WTC11 (cell line): ENCODE measurements at regions of chr1 and their contacts with region 1.

Region 1: DNA sequence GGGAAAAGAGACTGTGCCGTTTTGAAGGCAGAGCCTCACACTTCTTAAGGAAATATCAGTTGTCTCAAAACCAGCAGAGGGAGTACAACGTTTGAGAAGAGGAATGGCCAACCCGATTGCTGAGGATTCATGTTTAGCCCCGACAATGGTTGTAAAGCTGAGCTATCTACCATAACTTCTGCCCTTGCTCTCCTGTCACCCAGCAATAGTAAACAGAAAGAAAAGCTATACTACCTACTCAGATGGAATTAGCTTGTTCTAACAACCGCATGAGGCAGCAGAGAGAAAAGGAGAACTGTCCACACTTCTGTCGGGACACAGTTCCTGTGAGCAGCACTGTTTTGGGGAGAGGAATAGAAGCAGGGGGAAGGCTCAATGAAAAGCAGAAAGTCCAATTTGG is 91.2 kb downstream of the SLC45A1 start:
- DNase-seq: no peak
- ATAC-seq: peak; percentile 70
- H3K4me3 Mint-ChIP-seq: no peak overlapping the region
- H3K27ac Mint-ChIP-seq: peak overlapping the region; percentile 85
- H3K4me1 Mint-ChIP-seq: peaks cover 70% of the 10 kb centered on the region
- H3K27me3 Mint-ChIP-seq: no peaks in the 10 kb centered on the region
- CTCF ChIP-seq: no peak

Region 2: DNA sequence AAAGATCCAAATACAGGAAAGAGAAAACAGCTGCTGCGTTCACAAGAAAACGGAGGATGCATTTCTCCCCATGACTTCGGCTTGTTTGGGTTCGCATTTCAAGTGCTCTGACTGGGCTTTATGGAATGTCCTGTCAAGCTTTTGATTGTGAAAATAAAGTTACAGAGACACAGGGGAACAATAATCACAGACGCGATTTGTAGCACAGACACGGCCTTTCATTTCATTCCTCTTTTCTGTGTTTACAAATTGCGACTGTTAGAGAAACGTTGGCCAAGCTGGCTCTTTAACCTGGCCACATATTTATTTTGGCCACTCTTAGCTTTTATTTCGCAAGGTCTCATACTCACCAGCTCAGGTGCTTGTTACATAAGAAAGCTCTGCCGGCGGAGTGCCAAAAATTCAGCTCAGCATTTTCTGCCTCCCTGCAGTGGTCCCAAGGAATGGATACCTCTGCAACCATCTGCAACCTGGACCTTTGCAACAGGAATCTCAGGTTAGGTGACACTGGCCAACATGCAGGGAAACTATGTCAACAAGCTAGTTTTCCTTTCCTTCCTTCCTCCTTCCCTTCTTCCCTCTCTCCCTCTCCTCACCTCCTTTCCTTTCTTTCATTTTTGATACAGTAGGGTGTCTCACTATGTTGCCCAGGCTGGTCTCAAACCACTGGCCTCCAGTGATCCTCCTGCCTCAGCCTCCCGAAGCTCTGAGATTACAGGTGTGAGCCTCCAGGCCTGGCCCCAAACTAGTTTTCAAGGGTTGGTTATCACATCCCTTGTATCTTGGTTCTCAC is 149.4 kb before region 1 on chr1:
- CTCF ChIA-PET with region 1: no interaction called
- POLR2A ChIA-PET with region 1: no interaction called
- DNase-seq: no peak
- ATAC-seq: no peak; the same call in 1 of the 2 replicates
- H3K4me3 Mint-ChIP-seq: no peak overlapping the region
- H3K27ac Mint-ChIP-seq: peak overlapping the region; percentile 94
- H3K4me1 Mint-ChIP-seq: peaks cover 39% of the 10 kb centered on the region
- H3K27me3 Mint-ChIP-seq: no peaks in the 10 kb centered on the region
- CTCF ChIP-seq: no peak

Region 3: DNA sequence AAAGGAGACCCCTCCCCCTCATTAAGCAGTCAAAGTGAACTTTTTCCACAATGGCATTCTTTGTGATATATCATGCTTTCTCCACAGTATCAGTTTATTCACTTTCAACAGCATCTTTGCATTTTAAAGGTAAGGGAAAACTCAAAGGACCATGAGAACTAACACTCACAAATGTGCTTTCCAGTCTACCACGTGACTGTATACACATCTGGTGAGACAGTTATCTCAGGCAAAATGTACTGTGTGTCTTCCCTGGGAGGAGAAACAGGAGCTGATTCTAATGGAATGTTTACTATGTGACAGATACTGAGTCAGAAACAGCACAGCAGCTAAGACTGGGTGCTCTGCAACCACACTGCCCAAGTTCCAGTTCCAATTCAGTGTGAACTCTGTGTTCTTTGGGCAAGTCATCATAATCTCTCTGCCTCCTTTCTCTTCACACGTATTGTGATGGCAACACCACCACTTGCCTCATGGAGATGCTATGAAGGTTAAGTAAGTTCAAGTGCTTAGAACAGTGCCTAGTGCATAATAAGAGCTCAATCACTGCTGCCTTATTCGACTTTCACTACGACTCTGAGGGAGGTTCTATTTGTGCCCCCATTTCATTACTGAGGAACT is 12.2 kb before region 1 on chr1:
- CTCF ChIA-PET with region 1: interaction called, 24 read pairs
- POLR2A ChIA-PET with region 1: interaction called, 3 read pairs
- DNase-seq: no peak
- ATAC-seq: peak; percentile 24; the same call in 1 of the 2 replicates
- H3K4me3 Mint-ChIP-seq: 0 out of 2 replicates have a peak overlapping the region, but pooled peaks have one; percentile 9
- H3K27ac Mint-ChIP-seq: peak overlapping the region; percentile 68
- H3K4me1 Mint-ChIP-seq: peaks cover 53% of the 10 kb centered on the region
- H3K27me3 Mint-ChIP-seq: no peaks in the 10 kb centered on the region
- CTCF ChIP-seq: no peak

Region 4: DNA sequence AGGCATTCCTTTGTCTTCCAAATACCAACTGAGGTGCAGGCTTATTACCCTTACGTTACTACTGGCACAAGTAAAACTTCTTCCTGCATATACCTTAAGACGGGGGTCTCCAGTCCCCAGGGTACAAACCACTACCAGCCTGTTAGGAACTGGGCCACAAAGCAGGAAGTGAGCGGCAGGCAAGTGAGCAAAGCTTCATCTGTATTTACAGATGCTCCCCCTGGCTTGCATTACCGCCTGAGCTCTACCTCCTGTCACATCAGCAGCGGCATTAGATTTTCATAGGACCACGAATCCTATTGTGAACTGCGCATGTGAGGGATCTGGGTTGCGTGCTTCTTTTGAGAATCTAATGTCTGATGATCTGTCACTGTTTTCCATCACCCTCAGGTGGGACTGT is 21.9 kb after region 1 on chr1:
- CTCF ChIA-PET with region 1: interaction called, 13 read pairs
- POLR2A ChIA-PET with region 1: no interaction called
- DNase-seq: no peak
- ATAC-seq: peak; percentile 72; the same call in 1 of the 2 replicates
- H3K4me3 Mint-ChIP-seq: no peak overlapping the region
- H3K27ac Mint-ChIP-seq: no peak overlapping the region
- H3K4me1 Mint-ChIP-seq: peaks cover 40% of the 10 kb centered on the region
- H3K27me3 Mint-ChIP-seq: no peaks in the 10 kb centered on the region
- CTCF ChIP-seq: no peak